Mammary epithelial cell (primary cell): ENCODE measurements at regions of chr6 and their contacts with region 1.

Region 1: GRCh38 chr6:138001750-138002349 is 105.4 kb downstream of the PERP start:
- DNase-seq: peak; percentile 43
- H3K4me3 ChIP-seq: no peak overlapping the region
- H3K27ac ChIP-seq: no peak overlapping the region
- H3K4me1 ChIP-seq: peaks cover 11% of the 10 kb centered on the region
- H3K27me3 ChIP-seq: no peaks in the 10 kb centered on the region
- CTCF ChIP-seq: peak; percentile 91

Region 2: DNA sequence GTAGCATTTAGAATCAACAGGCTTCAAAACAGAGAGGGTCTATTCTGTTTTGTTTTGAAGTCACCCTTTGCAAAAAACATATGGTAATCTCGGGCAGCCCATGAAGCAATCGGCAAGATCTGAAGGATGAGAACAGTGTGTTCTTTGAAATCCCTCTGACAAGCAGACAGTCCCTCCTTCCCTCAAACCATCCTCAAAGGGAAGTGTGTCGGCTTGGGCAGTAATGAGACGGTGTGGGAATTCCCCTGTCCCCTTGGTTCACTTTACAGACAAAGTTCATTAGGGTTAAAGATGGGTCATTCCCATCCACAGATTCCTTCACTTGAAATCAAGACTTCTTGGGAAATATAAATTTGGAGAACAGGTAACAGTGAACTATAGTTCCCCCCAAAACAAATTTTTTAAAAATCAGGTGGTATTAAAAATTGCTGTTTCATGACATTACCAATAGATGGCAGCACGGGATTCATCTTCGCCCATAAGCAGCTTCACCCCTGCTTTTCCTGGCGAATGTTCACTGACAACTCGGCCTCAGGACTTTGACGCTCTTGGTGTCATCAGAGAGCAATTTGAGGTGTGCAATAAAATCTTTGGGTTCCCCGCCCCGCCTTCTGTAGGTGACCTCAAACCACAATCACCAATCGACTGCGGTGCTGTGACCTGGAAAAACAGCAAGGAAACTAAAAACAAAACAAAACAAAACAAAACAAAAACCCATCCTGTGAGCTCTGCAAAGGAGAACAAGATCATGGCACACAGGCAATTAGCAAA is 294.1 kb before region 1 on chr6:
- CTCF ChIA-PET with region 1: no interaction called
- dilution Hi-C with region 1: no loop called
- in situ Hi-C with region 1: no loop called
- intact Hi-C with region 1: loop called (anchors 1 kb)
- DNase-seq: peak; percentile 92
- H3K4me3 ChIP-seq: no peak overlapping the region
- H3K27ac ChIP-seq: peak overlapping the region; percentile 64
- H3K4me1 ChIP-seq: peaks cover 7% of the 10 kb centered on the region
- H3K27me3 ChIP-seq: no peaks in the 10 kb centered on the region
- CTCF ChIP-seq: peak; percentile 65 to 75

Region 3: GRCh38 chr6:137944793-137945498 is 56.9 kb before region 1 on chr6:
- CTCF ChIA-PET with region 1: no interaction called
- dilution Hi-C with region 1: no loop called
- in situ Hi-C with region 1: no loop called
- intact Hi-C with region 1: no loop called
- DNase-seq: peak; percentile 34
- H3K4me3 ChIP-seq: no peak overlapping the region
- H3K27ac ChIP-seq: no peak overlapping the region
- H3K4me1 ChIP-seq: peaks cover 12% of the 10 kb centered on the region
- H3K27me3 ChIP-seq: no peaks in the 10 kb centered on the region
- CTCF ChIP-seq: peak; percentile 68 to 81

Region 4: DNA sequence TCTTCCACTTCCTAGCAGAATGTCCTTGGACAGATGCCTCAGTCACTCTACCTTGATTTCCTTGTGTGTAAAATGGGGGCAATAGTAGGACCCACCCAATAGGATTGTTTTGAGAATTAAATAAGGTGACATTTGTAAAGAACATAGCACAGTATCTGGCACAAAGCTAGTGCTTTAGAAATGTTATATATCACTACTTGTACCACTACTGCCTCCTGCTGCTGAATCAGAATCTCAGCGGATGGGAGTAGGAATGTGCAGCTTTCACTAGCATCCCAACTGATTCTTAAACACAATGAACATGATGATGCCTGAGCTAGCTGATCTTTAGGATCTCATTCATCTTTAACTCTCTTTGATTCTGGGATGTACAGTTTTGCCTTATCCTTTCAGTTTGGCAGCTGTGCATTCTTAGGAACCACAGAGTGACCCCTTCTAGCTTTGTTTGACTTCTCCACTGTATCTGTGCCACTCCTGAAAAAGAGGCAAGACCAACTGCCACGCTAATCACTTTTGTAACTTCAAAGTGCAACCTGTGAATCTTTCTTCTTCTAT is 209.3 kb after region 1 on chr6:
- CTCF ChIA-PET with region 1: no interaction called
- dilution Hi-C with region 1: no loop called
- in situ Hi-C with region 1: no loop called
- intact Hi-C with region 1: loop called (anchors 1 kb)
- DNase-seq: no peak
- H3K4me3 ChIP-seq: no peak overlapping the region
- H3K27ac ChIP-seq: no peak overlapping the region
- H3K4me1 ChIP-seq: no peaks in the 10 kb centered on the region
- H3K27me3 ChIP-seq: no peaks in the 10 kb centered on the region
- CTCF ChIP-seq: peak; percentile 4 to 16

Region 5: DNA sequence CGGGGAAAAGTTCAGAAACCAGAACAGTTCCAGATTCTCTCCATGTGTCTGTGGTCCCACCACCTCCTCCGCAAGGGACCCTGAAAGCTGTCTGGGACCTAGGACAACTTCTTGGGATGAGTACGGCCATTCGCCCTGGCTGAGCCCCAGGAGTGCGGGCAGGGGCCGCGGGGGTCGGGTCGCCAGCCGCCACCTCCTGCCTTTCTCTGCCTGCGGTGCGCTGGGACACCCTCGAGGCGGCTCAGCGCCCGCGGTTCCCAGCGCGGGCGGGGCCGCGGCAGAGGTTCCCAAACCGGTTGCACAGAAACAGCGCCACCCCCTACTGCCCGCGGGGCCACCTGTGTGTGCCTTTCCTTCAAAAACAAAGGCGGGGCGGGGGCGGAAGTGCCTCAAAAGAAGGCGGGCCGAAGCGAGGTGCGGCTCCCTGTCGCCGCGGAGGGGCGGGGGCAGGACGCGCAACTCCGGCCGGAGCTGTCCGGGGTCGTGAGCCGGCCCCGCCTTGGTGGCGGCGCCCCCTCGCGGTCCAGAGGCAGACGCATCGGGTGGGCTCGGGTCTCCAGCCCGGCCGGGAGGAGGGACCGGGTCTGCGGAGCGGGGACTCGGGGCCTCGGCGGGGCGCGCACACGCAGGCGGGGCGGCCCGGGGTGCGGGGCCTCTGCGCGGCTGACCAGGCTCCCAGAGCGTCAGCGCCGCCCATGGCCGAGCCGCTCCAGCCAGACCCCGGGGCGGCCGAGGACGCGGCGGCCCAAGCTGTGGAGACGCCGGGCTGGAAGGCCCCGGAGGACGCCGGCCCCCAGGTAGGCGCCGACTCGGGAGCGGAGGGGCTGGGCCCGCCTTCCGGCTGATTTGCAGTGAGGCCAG is 402.2 kb after region 1 on chr6 and contains the start of gene HEBP2:
- CTCF ChIA-PET with region 1: no interaction called
- dilution Hi-C with region 1: no loop called
- in situ Hi-C with region 1: loop called in 1 of 2 experiments (anchors 25 kb)
- intact Hi-C with region 1: no loop called
- DNase-seq: peak; percentile 95
- H3K4me3 ChIP-seq: peak within 1 kb of the TSS; percentile 84 to 98 (median 88)
- H3K27ac ChIP-seq: peak within 1 kb of the TSS; percentile 98
- H3K4me1 ChIP-seq: peaks cover 21% of the 10 kb centered on the region
- H3K27me3 ChIP-seq: no peaks in the 10 kb centered on the region
- CTCF ChIP-seq: peak in 1 of 2 donors; percentile 40
- total RNA-seq, gene HEBP2: 63.8 to 99.1 TPM

Region 6: GRCh38 chr6:138517635-138518034 is 515.8 kb after region 1 on chr6:
- CTCF ChIA-PET with region 1: no interaction called
- dilution Hi-C with region 1: no loop called
- in situ Hi-C with region 1: no loop called
- intact Hi-C with region 1: loop called (anchors 10 kb)
- DNase-seq: peak; percentile 48
- H3K4me3 ChIP-seq: no peak overlapping the region
- H3K27ac ChIP-seq: no peak overlapping the region
- H3K4me1 ChIP-seq: peaks cover 8% of the 10 kb centered on the region
- H3K27me3 ChIP-seq: no peaks in the 10 kb centered on the region
- CTCF ChIP-seq: peak; percentile 87 to 95